Activated T-helper 1 cell treated with anti-CD3 and anti-CD28 coated beads, Interleukin-12 subunit alpha, Interleukin-12 subunit beta, Interleukin-2, Interleukin-4 antibody, amounts not matched to agents 30 ng/mL and 10 ng/mL and 1 ng/mL, durations not matched to agents 14 hours and 24 hours and 36 hours (primary cell): ENCODE measurements at regions of chr4 and their contacts with region 1.

Region 1: GRCh38 chr4:38310446-38311043 is 350.3 kb downstream of the PTTG2 start:
- DNase-seq: peak; percentile 83
- H3K4me3 Mint-ChIP-seq: peak overlapping the region; percentile 51
- H3K27ac Mint-ChIP-seq: peak overlapping the region; percentile 90
- H3K4me1 Mint-ChIP-seq: peaks cover 81% of the 10 kb centered on the region
- H3K27me3 Mint-ChIP-seq: peaks cover 15% of the 10 kb centered on the region

Region 2: GRCh38 chr4:37721995-37722638 is 588.4 kb before region 1 on chr4:
- intact Hi-C with region 1: loop called (anchors 2 kb)
- DNase-seq: no peak
- H3K4me3 Mint-ChIP-seq: no peak overlapping the region
- H3K27ac Mint-ChIP-seq: peak overlapping the region; percentile 61
- H3K4me1 Mint-ChIP-seq: peaks cover 24% of the 10 kb centered on the region
- H3K27me3 Mint-ChIP-seq: no peaks in the 10 kb centered on the region

Region 3: GRCh38 chr4:38160487-38161207 is 149.9 kb before region 1 on chr4:
- intact Hi-C with region 1: loop called (anchors 1 kb)
- DNase-seq: peak; percentile 66
- H3K4me3 Mint-ChIP-seq: peak overlapping the region; percentile 51
- H3K27ac Mint-ChIP-seq: peak overlapping the region; percentile 90
- H3K4me1 Mint-ChIP-seq: peaks cover 80% of the 10 kb centered on the region
- H3K27me3 Mint-ChIP-seq: peaks cover 7% of the 10 kb centered on the region

Region 4: DNA sequence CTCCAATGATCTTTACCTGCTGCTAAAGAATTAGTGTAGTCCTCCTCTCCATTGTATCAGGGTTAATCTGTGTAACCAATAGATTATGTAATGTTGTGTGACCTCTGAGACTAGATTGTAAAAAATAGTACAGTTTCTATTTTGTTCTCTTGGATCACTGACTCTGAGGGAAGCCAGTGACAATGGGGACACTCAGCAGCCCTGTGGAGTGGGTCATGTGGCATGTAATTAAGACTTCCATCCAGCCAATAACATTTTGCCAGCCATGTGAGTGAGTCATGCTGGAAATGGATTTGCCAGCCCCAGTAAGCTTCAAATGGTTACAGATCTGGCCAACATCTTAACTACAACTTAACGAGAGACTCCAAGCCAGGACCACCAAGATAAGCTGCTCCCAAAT is 18.0 kb before region 1 on chr4:
- intact Hi-C with region 1: no loop called
- DNase-seq: no peak
- H3K4me3 Mint-ChIP-seq: no peak overlapping the region
- H3K27ac Mint-ChIP-seq: no peak overlapping the region
- H3K4me1 Mint-ChIP-seq: no peaks in the 10 kb centered on the region
- H3K27me3 Mint-ChIP-seq: peaks cover 23% of the 10 kb centered on the region

Region 5: DNA sequence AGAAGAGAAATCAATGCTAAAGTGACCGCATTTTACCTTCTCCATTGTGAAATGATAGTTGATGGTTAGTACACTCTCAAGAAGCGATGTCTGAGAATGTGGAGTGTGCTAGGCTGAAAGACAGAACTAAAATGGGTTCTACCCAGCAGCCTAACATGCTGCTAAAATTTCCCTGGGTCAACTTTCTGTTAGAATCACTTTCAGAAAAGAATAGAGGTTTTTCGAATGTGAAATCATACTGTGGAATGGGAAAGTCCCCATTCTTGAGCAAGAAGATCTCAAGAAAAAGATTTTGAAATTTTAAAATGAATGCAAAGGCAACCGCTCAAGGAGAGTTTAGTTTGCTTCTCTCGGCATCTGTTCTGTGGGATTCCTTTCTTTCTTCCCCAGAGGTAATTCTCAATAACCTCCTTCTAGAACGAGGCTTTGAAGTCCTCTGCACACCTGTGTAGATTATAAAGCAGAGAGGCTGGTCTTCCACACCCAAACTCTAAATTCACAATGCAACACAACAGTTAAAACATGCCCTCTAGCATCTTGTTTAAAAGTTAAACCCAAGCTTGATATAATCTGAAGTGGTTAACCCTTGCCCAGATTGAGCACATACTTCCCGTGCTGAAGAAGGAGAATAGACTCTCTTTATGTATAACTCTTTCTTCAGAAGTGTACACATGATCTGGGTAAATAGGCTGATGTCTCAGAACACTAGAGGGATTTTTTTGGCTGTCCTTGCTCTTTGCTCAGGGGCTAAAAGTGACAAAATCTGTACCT is 144.7 kb after region 1 on chr4:
- intact Hi-C with region 1: loop called (anchors 1 kb)
- DNase-seq: no peak
- H3K4me3 Mint-ChIP-seq: peak overlapping the region; percentile 16
- H3K27ac Mint-ChIP-seq: peak overlapping the region; percentile 45
- H3K4me1 Mint-ChIP-seq: peaks cover 46% of the 10 kb centered on the region
- H3K27me3 Mint-ChIP-seq: peaks cover 4% of the 10 kb centered on the region

Region 6: GRCh38 chr4:38730830-38731646 is 420.5 kb after region 1 on chr4:
- intact Hi-C with region 1: loop called (anchors 2 kb)
- DNase-seq: peak; percentile 66
- H3K4me3 Mint-ChIP-seq: no peak overlapping the region
- H3K27ac Mint-ChIP-seq: no peak overlapping the region
- H3K4me1 Mint-ChIP-seq: peaks cover 22% of the 10 kb centered on the region
- H3K27me3 Mint-ChIP-seq: peaks cover 22% of the 10 kb centered on the region

Region 7: GRCh38 chr4:38856524-38857337 is 546.2 kb after region 1 on chr4 and contains the start of gene TLR6:
- intact Hi-C with region 1: loop called (anchors 5 kb)
- DNase-seq: peak; percentile 65
- H3K4me3 Mint-ChIP-seq: peak within 1 kb of the TSS; percentile 88
- H3K27ac Mint-ChIP-seq: peak within 1 kb of the TSS; percentile 88
- H3K4me1 Mint-ChIP-seq: peaks cover 50% of the 10 kb centered on the region
- H3K27me3 Mint-ChIP-seq: no peaks in the 10 kb centered on the region
- total RNA-seq, gene TLR6: 1.3 and 1.7 TPM in 2 replicates